Activated naive CD4-positive, alpha-beta T cell treated with anti-CD3 and anti-CD28 coated beads for 36 hours (primary cell): ENCODE measurements at regions of chr15 and their contacts with region 1.

Region 1: DNA sequence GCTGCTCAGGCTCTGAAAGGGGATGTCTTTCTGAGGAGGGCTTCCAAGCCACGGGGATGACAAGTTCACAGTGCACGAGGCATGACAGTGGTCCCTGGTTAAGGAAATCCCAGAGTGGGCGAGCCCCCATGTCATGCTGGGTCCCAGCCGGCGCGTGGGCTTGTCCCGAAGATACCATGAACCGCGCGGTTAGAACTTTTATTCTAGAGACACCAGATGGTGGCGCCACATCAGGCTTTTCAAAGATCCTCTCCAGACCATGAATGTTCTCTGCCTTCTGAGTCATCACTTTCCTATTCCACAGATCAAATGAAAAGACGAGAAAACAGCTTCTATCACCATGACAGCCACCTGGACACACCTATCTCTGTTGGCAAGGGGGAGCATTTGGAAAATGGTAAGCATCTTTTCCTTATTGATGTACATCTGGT is 227.8 kb upstream of the LYSMD4 start:
- DNase-seq: peak; percentile 67
- H3K4me3 Mint-ChIP-seq: no peak overlapping the region
- H3K27ac Mint-ChIP-seq: no peak overlapping the region
- H3K4me1 Mint-ChIP-seq: peaks cover 14% of the 10 kb centered on the region
- H3K27me3 Mint-ChIP-seq: no peaks in the 10 kb centered on the region

Region 2: DNA sequence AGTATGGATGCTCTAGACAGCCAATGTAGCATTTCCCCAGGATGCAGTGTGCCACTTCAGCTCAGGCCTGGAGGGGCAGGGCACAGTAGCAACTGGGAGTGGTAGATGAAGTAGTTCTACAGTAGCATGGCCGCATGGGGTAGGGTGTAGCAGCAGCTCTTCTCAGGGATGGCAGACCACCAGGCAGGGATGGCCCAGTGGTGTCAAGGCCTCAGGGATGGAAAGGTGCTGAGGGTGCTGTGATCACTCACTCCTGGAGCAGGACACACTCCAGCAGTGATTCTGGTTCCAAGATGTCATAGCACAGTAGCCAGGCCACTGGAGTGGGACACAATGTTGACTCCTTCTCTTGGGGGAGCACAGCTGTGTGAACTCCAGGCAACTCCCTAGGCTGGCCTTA is 16.9 kb before region 1 on chr15:
- CTCF ChIA-PET with region 1: no interaction called
- intact Hi-C with region 1: no loop called
- DNase-seq: no peak
- H3K4me3 Mint-ChIP-seq: no peak overlapping the region
- H3K27ac Mint-ChIP-seq: no peak overlapping the region
- H3K4me1 Mint-ChIP-seq: no peaks in the 10 kb centered on the region
- H3K27me3 Mint-ChIP-seq: no peaks in the 10 kb centered on the region

Region 3: GRCh38 chr15:100131321-100132224 is 170.5 kb after region 1 on chr15:
- CTCF ChIA-PET with region 1: no interaction called
- intact Hi-C with region 1: loop called (anchors 1 kb)
- DNase-seq: peak; percentile 69
- H3K4me3 Mint-ChIP-seq: peak overlapping the region; percentile 47
- H3K27ac Mint-ChIP-seq: no peak overlapping the region
- H3K4me1 Mint-ChIP-seq: peaks cover 2% of the 10 kb centered on the region
- H3K27me3 Mint-ChIP-seq: no peaks in the 10 kb centered on the region